Colonic mucosa (tissue), 4 donors: ENCODE measurements at regions of chr6 and their contacts with region 1.

Region 1: DNA sequence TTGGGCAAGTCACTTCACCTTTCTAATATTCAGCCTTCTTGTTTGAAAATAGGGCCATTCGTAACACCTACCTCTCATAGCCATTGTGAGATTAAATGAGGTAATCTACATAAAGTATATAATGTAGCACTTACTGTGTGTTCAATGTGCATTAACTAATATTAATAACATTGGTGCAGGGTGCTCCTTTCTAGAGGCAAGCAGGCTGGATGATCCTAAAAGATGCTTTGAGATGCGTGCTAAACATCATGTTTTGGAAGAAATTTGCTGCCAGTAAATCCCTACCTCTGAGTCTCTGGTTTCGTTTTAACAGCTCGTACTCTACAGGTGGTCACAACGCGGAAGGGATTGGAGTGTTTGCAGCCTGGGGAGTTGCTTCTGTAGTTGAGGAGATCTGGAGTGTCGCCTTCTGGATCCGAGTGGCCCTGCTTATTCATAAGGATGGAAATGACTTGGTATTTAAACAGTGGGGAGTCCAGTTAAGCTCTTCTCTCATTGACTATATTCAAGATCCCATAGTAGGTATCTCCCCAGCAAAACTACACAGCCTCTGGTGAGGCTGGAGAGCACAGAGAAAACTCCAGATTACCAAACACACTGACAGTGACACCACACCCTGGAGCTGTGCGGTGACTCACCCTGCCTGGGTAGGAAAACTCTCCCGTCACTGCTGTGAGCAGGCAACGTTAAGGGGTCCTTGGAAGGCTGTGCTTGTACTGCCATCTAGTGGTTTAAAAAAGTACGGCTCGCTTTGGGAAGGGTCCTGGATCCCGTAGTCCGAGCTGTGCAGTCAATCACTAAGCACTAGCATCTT is 107.9 kb downstream of the MAP3K7 start:
- DNase-seq: peak; percentile 83
- H3K4me3 ChIP-seq: no peak overlapping the region
- H3K27ac ChIP-seq: no peak overlapping the region
- H3K4me1 ChIP-seq: no peaks in the 10 kb centered on the region
- H3K27me3 ChIP-seq: no peaks in the 10 kb centered on the region
- CTCF ChIP-seq: peak; percentile 89

Region 2: GRCh38 chr6:89940225-89941027 is 538.6 kb before region 1 on chr6:
- intact Hi-C with region 1: loop called (anchors 2 kb)
- DNase-seq: peak; percentile 70
- H3K4me3 ChIP-seq: no peak overlapping the region
- H3K27ac ChIP-seq: no peak overlapping the region
- H3K4me1 ChIP-seq: no peaks in the 10 kb centered on the region
- H3K27me3 ChIP-seq: no peaks in the 10 kb centered on the region
- CTCF ChIP-seq: peak; percentile 61

Region 3: GRCh38 chr6:90296346-90297114 is 182.5 kb before region 1 on chr6 and contains the start of gene BACH2:
- intact Hi-C with region 1: loop called (anchors 10 kb)
- DNase-seq: peak; percentile 92
- H3K4me3 ChIP-seq: peak within 1 kb of the TSS; percentile 58
- H3K27ac ChIP-seq: peak within 1 kb of the TSS; percentile 53
- H3K4me1 ChIP-seq: peaks cover 9% of the 10 kb centered on the region
- H3K27me3 ChIP-seq: peaks cover 34% of the 10 kb centered on the region
- CTCF ChIP-seq: no peak
- total RNA-seq, gene BACH2: 0.52 to 1.2 TPM

Region 4: GRCh38 chr6:90753820-90754643 is 275.0 kb after region 1 on chr6:
- intact Hi-C with region 1: no loop called
- DNase-seq: no peak
- H3K4me3 ChIP-seq: no peak overlapping the region
- H3K27ac ChIP-seq: no peak overlapping the region
- H3K4me1 ChIP-seq: no peaks in the 10 kb centered on the region
- H3K27me3 ChIP-seq: no peaks in the 10 kb centered on the region
- CTCF ChIP-seq: no peak